Endothelial cell of umbilical vein (primary cell): ENCODE measurements at regions of chr2 and their contacts with region 1.

Region 1: GRCh38 chr2:88055371-88056128 is at the start of gene KRCC1:
- DNase-seq: peak; percentile 88
- H3K4me3 ChIP-seq: peak within 1 kb of the TSS; percentile 51 to 89 (median 69)
- H3K27ac ChIP-seq: peak within 1 kb of the TSS; percentile 91
- H3K4me1 ChIP-seq: peaks cover 22% of the 10 kb centered on the region
- H3K27me3 ChIP-seq: no peaks in the 10 kb centered on the region
- CTCF ChIP-seq: no peak
- POLR2A ChIP-seq: peak; percentile 92
- total RNA-seq, gene KRCC1: 13.7 and 15.0 TPM in 2 replicates

Region 2: DNA sequence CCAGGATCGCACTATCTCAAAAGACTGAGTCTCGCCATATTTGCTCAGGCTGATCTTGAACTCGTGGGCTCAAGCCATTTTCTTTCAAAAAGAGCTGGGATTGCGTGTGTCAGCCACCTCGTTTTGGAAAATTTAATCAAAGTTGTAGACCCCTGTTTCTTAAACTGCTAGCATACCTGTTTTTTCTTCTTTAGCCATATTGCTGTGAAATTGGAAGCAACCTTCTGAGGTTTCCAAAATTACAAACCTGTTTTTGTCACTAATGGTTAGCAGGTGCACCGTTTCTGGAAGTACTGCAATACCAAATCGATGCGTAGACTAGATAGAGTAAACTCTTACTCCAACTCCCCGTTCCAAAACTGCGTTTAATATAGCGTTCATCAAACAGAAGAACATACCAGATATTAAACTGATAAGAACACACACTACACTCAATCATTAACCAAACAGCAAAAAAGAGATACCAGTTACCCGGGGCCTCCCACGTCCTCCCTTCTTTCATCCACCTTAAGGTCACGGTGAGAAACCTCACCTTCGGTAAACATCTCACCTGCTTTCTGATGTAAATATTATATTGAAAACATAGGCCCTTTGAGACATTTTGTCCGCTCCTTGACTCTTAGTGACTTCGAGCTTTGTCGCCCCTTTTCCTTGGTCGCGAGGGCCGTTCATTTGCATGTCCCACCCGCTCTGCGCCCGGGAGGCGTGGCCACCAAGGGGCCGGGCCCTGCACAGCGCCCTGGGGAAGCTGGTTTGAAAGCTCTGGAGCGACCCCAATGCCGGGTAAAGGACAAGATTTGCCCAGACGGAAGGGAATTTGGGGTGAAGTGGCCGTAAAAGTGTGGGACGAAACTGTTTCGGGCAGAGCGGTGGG is 39.2 kb before region 1 on chr2 and contains the start of gene RNU2-63P:
- CTCF ChIA-PET with region 1: interaction called, 4 read pairs
- POLR2A ChIA-PET with region 1: interaction called, 5 read pairs
- dilution Hi-C with region 1: no loop called
- intact Hi-C with region 1: loop called (anchors 1 kb)
- DNase-seq: peak; percentile 86
- H3K4me3 ChIP-seq: peak within 1 kb of the TSS; percentile 4 to 69 (median 46)
- H3K27ac ChIP-seq: peak within 1 kb of the TSS; percentile 98
- H3K4me1 ChIP-seq: peaks cover 4% of the 10 kb centered on the region
- H3K27me3 ChIP-seq: no peaks in the 10 kb centered on the region
- CTCF ChIP-seq: no peak
- POLR2A ChIP-seq: peak; percentile 100
- total RNA-seq, gene RNU2-63P: 8.5 TPM in 1 of 2 replicates, not detected in the other

Region 3: DNA sequence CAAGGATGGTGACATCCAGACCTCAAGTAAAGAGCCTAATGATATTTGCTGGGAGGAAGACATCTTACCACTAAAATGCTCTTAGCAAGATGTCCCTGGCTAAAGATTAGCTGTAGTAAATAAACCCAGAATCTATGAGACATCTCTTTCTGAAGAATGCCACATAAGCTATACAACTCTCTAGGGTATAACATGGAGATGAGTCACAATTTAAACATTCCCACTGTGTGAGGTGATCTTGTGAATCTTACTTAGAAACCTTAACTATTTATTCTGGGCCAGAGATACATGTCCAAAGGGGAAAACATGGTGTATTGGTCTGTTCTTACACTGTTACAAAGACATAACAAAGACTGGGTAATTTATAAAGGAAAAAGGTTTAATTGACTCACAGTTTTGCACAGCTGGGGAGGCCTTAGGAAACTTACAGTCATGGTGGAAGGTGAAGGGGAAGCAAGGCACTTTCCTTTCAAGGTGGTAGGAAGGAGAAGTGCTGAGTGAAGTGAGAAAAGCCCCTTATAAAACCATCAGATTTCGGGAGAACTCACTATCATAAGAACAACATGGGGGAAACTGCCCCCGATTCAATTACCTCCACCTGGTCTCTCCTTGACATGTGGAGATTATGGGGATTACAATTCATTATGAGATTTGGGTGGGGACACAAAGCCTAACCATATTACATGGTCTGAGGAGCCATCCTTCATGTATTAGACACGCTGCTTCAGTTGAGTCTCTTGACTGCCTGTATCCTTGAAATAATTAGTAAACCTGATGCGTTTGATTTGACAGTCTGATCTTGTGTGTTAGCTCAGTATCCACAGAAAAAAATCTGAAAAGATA is 17.1 kb before region 1 on chr2:
- CTCF ChIA-PET with region 1: interaction called, 11 read pairs
- POLR2A ChIA-PET with region 1: no interaction called
- dilution Hi-C with region 1: no loop called
- intact Hi-C with region 1: no loop called
- DNase-seq: peak; percentile 28
- H3K4me3 ChIP-seq: no peak overlapping the region
- H3K27ac ChIP-seq: peak overlapping the region; percentile 40
- H3K4me1 ChIP-seq: peaks cover 9% of the 10 kb centered on the region
- H3K27me3 ChIP-seq: no peaks in the 10 kb centered on the region
- CTCF ChIP-seq: no peak
- POLR2A ChIP-seq: no peak

Region 4: DNA sequence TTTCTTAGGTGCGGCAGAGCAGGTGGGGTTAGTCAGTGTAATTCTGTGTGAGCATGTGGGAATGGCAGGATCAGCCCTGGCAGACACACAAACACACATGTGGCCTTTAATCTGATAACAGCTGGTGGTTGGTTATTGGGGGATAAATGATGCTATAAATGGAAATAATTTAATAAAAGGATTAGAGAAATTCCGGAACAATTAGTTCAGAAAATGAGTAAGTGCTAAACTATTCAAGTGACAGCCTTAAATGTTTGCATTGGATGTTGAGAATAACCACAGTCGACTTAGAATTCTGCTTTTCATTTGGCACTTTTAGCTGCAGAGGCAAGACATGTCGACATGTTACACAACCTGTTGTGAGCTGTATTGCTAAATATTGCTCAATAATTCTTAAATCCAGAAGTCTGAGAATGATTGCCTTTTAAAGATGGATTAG is 19.3 kb after region 1 on chr2:
- CTCF ChIA-PET with region 1: interaction called, 19 read pairs
- POLR2A ChIA-PET with region 1: no interaction called
- dilution Hi-C with region 1: no loop called
- intact Hi-C with region 1: no loop called
- DNase-seq: no peak
- H3K4me3 ChIP-seq: no peak overlapping the region
- H3K27ac ChIP-seq: no peak overlapping the region
- H3K4me1 ChIP-seq: no peaks in the 10 kb centered on the region
- H3K27me3 ChIP-seq: peaks cover 0 to 2% of the 10 kb centered on the region in 2 experiments
- CTCF ChIP-seq: no peak
- POLR2A ChIP-seq: no peak

Region 5: DNA sequence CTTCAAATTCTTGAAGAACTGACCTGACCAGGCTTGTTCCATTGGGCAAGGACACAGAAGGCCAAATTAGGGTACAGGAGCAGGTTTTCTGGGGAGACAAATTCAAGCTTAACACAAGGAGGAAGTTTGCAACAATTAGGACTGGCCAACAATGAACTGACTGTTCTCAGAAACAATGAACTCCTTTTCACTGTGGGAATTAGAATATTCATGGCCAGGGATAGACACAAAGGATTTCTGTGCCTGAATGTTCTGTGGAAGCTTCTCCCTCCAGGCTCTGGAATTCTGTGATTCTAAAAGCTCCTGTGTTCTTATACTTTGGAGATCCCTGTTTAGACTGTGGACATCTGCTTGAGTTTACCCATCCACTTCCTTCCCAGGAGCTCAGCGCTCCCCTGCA is 27.2 kb after region 1 on chr2:
- CTCF ChIA-PET with region 1: interaction called, 17 read pairs
- POLR2A ChIA-PET with region 1: no interaction called
- dilution Hi-C with region 1: no loop called
- intact Hi-C with region 1: no loop called
- DNase-seq: no peak
- H3K4me3 ChIP-seq: no peak overlapping the region
- H3K27ac ChIP-seq: no peak overlapping the region
- H3K4me1 ChIP-seq: no peaks in the 10 kb centered on the region
- H3K27me3 ChIP-seq: no peaks in the 10 kb centered on the region
- CTCF ChIP-seq: no peak
- POLR2A ChIP-seq: no peak

Region 6: GRCh38 chr2:88159955-88160415 is 104.4 kb after region 1 on chr2:
- CTCF ChIA-PET with region 1: interaction called, 215 read pairs
- POLR2A ChIA-PET with region 1: no interaction called
- dilution Hi-C with region 1: no loop called
- intact Hi-C with region 1: loop called (anchors 1 kb)
- DNase-seq: peak; percentile 49
- H3K4me3 ChIP-seq: no peak overlapping the region
- H3K27ac ChIP-seq: no peak overlapping the region
- H3K4me1 ChIP-seq: no peaks in the 10 kb centered on the region
- H3K27me3 ChIP-seq: no peaks in the 10 kb centered on the region
- CTCF ChIP-seq: peak; percentile 74 to 78
- POLR2A ChIP-seq: no peak

Region 7: GRCh38 chr2:88187038-88187676 is 131.6 kb after region 1 on chr2:
- CTCF ChIA-PET with region 1: interaction called, 9 read pairs
- POLR2A ChIA-PET with region 1: no interaction called
- dilution Hi-C with region 1: no loop called
- intact Hi-C with region 1: loop called (anchors 1 kb)
- DNase-seq: peak; percentile 33
- H3K4me3 ChIP-seq: no peak overlapping the region
- H3K27ac ChIP-seq: no peak overlapping the region
- H3K4me1 ChIP-seq: no peaks in the 10 kb centered on the region
- H3K27me3 ChIP-seq: no peaks in the 10 kb centered on the region
- CTCF ChIP-seq: peak; percentile 40 to 68
- POLR2A ChIP-seq: no peak

Region 8: DNA sequence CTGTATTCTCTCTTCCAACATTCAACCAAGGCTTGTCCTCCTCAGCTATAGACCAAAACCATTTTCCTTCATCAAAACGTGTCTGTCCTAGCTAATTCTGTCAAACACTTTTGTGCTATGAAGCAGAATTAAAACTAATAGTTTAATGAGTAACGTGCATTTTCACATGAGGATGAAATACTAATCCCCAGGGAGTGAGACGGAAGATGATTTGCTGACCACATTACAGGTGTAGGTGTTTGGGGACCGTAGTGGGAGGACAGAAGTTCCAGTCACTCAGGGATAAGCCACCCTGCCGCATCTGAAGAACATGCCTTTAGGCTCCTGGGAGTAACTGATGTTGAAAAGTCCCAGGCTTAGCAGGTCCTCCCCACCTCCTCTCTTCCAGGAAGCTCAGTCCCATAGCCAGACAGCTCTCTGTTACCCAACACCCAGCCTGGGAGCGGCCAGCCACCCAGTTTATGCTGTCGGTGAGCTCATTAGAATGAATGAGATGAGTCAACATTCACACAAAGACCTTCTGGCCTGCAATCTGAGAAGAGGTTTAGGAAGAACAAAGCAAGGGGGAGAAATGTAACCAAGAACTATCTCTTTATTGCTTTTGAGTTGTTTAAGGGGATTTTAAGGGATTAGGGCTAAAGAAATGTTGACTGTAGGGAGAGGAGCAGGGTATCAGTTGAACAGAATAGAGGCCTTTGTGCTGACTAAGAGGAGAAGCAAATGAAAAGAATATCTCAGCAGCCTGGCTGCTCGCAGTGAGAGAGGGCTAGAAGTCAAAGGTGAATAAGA is 274.5 kb after region 1 on chr2:
- CTCF ChIA-PET with region 1: no interaction called
- POLR2A ChIA-PET with region 1: no interaction called
- dilution Hi-C with region 1: no loop called
- intact Hi-C with region 1: no loop called
- DNase-seq: no peak
- H3K4me3 ChIP-seq: no peak overlapping the region
- H3K27ac ChIP-seq: no peak overlapping the region
- H3K4me1 ChIP-seq: no peaks in the 10 kb centered on the region
- H3K27me3 ChIP-seq: no peaks in the 10 kb centered on the region
- CTCF ChIP-seq: no peak
- POLR2A ChIP-seq: no peak